ENCODE measurements at regions of chr7 and their contacts with region 1.

Region 1: DNA sequence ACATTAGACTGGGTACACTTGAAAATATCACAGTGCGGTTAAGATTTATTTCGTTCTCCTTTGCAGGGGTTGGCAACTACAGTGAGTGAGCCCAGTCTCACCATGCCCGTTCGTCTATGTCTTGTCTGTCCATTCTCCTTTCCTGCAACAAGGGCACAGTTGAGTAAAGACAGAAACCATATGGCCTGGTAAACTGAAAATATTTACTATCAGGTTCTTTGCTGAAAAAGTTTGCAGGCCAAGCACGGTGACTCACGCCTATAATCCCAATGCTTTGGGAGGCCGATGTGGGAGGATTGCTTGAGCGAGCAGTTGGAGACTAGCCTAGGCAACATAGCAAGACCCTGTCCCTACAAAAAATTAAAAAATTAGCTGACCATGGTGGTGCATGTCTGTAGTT is 11.4 kb upstream of the KCTD7 start:
- DNase-seq: no peak
- H3K4me3 ChIP-seq: no peak overlapping the region
- H3K27ac ChIP-seq: no peak overlapping the region
- H3K4me1 ChIP-seq: no peaks in the 10 kb centered on the region
- H3K27me3 ChIP-seq: no peaks in the 10 kb centered on the region
- CTCF ChIP-seq: no peak
- POLR2A ChIP-seq: no peak

Region 2: DNA sequence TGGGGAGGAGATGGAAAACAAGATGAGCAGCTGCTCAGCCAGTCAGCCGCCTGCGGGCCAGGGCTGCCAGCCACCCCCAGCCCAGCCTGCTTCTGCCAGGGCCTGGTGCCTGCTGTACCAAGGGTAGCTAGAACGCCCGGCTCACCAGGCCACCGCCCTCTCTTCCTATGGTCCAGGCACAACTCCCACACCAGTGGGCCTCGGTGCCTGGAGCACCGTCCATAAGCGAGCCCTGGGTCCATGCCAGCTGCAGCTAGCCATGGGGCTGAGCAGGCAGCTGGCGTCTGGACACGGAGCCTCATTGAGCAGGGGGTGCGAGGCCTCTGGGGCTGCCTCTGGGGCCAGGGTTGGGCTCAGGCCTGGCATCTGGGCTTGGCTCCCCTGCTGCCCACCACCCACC is 114.7 kb after region 1 on chr7:
- intact Hi-C with region 1: no loop called
- DNase-seq: no peak
- H3K4me3 ChIP-seq: no peak overlapping the region
- H3K27ac ChIP-seq: no peak overlapping the region
- H3K4me1 ChIP-seq: peaks cover 2% of the 10 kb centered on the region
- H3K27me3 ChIP-seq: no peaks in the 10 kb centered on the region
- CTCF ChIP-seq: no peak
- POLR2A ChIP-seq: no peak

Region 3: GRCh38 chr7:66804001-66804400 is 186.7 kb after region 1 on chr7:
- intact Hi-C with region 1: no loop called
- DNase-seq: no peak
- H3K4me3 ChIP-seq: no peak overlapping the region
- H3K27ac ChIP-seq: no peak overlapping the region
- H3K4me1 ChIP-seq: no peaks in the 10 kb centered on the region
- H3K27me3 ChIP-seq: no peaks in the 10 kb centered on the region
- CTCF ChIP-seq: no peak
- POLR2A ChIP-seq: no peak

Region 4: DNA sequence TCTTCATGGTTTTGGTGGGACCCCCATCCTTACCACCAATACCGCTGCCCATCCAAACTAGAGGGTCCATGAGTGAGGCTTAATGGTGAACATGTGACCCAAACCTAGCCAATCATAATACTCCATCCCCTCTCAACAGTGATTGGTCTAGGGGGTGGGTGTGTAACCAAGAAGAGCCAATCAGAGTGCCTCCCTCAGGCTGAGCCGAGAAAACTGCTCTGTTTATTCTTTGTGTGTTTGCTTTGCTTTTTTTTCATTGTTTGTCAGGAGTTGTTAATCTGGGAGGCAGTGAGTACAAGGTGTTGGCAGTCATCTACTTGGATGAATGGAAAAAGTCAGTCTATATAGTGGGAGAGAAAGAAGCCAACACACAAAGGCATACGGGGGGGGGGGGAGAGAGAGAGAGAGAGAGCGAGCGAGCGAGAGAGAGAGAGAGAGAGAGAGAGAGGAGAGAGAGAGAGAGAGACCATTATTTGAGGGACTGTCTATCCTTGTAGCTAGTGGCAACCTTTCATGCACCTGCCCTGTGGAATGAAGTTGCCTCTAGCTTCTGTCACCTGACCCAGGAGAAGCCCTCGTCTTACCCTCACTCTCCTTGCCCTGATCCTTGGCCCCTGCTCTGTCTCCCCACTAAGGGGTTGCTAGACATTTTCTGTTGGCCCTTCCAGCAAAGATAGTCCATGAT is 821.0 kb after region 1 on chr7:
- intact Hi-C with region 1: loop called (anchors 5 kb)
- DNase-seq: no peak
- H3K4me3 ChIP-seq: no peak overlapping the region
- H3K27ac ChIP-seq: no peak overlapping the region
- H3K4me1 ChIP-seq: no peaks in the 10 kb centered on the region
- H3K27me3 ChIP-seq: no peaks in the 10 kb centered on the region
- CTCF ChIP-seq: no peak
- POLR2A ChIP-seq: no peak